ENCODE measurements at regions of chr12 and their contacts with region 1.

Region 1: DNA sequence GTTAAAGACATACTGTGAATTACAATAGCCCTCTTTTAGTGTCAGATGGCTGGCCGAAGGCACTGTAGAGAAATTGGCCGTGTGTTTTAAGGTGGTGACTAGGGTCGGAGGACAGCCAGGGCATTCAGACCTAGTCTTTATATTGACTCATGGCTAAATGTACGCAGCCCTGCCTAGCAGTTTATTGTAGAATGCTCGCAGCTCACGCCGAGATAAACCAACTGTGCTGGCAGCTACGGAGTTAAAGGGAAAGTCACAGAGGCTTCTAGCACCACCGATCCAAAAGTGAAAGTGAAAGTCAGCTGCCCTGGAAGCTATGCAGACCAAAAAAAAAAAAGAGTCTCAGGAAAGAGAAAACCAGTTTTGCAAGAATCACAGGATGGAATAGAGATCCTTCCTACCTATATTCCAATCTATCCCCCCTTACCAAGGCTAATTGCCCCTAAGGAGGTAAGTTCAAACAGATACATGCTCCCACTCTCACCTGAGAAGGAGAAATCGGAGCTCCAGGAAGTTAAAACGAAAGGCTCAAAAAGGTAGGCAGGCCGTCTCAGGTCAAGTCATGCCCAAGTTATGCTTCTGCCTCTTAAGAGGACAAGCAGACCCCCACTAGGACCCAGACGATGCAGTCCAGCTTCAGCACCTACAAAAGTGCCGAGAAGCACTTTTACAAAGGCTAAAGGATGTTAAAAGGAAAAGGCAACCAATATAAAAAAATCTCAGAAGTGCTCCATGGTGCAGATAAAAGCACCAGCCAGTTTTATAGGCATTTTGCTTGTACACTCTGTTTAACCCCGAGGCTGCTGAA is 24.8 kb downstream of the KLRK1 start:
- DNase-seq: peak; percentile 83

Region 2: DNA sequence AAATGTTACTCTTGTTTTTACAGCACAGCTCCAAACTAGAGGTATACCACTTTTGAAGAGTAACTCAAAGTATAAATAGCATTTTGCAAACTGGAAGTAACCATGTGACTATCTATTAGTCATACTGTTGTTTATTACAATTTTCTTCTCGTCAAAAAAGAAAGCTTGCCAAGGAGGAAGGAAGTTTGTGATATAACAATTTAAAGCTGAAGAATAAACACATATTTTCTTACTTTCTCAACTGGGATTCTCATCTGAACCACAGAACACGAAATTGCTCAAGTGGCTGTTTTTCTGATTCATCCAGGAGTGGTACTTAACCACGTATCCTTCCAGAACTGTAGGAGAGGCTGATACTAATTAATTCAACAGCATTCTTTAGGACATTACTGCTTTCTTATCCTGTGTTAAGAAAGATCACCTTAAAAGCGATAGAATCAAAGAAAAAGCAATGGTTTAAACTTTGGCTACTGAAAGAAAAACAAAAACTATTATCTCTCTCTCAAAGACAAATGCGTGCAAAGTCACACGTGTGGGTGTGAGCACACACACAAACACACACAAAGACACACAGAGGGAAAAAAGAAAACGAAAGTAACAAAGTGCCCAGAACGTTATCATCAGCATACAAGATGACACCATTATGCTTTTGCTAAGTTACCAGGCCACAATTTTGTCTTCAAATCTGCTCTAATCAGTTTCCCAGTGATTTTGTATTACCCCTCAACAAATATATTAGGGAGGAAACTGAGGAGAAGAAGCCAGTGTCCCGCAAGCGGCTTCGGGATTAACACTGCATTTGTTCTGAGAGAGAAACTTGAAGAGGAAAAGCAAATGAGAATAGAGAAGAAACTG is 495.5 kb before region 1 on chr12 and contains the start of gene CLEC2B:
- intact Hi-C with region 1: loop called (anchors 10 kb)
- DNase-seq: no peak
- total RNA-seq, gene CLEC2B: 6.7 TPM

Region 3: DNA sequence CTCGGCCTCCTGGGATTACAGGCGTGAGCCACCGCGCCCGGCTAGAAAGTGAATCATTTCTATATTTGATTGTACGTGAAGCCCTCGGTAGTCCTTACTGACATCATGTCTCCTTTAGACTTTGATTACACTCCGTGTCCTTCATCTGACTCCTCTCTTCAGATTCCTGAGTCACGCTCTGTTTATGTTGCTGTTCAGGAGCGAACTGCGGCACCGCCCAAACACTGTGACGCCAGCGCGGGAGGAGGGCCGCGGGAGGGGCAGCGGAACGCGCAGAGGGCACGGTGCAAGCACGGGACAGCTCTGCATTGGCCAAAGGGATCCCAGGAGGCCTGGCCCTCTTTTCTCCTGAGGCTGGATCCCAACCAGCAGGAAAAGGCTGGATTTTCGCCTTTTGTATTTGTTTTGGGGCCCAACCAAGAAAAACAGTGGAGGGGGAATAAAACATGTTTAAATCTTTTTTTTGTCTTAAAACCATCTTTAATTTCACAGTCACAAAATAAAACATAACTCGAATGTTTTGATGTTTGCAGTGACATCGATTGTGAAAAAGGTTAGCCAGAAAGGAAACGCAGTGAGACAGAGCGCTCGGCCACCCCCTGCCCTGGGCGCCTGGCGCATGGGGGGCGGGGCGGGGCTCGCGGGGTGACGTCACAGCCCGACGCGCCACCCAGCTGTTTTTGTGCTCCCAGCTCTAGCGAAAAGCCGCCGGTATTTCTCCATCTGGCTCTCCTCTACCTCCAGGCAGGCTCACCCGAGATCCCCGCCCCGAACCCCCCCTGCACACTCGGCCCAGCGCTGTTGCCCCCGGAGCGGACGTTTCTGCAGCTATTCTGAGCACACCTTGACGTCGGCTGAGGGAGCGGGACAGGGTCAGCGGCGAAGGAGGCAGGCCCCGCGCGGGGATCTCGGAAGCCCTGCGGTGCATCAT is 152.6 kb before region 1 on chr12 and contains the start of gene GABARAPL1:
- intact Hi-C with region 1: loop called (anchors 10 kb)
- DNase-seq: peak; percentile 99
- total RNA-seq, gene GABARAPL1: 280 TPM

Region 4: DNA sequence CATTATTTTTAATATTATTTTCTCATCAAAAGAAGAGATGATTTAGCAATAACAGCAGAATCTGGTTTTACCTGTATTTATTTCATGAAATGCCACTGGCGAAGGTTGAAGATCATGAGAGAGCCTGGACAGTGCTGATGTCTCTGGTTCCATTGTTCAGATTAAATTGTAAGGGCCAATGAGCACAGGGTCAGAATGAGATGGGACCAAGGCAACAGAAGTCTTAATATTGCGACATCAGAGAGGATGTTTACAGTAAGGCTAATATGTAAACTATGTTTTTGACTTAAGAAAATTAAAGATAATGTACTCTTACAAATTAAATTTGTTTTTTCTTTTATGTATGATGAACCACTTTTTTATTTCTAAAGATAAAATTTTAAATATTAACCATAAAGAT is 92.6 kb before region 1 on chr12:
- intact Hi-C with region 1: no loop called
- DNase-seq: no peak

Region 5: GRCh38 chr12:10285919-10286318 is 79.1 kb before region 1 on chr12:
- intact Hi-C with region 1: no loop called
- DNase-seq: no peak

Region 6: DNA sequence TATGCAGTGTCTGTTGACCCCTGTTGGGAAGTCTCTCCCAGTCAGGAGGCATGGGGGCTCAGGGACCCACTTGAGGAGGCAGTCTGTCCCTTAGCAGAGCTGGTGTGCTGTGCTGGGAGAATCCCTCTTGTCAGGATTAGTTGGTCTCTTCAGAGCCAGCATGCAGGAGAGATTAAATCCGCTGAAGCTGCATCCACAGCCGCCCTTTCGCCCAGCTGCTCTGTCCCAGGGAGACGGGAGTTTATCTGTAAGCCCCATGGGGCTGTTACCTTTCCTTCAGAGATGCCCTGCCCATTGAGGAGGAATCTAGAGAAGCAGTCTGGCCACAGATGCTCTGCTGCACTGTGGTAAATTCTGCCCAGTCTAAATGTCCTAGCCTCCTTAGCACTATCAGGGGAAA is 101.3 kb after region 1 on chr12:
- intact Hi-C with region 1: no loop called
- DNase-seq: no peak

Region 7: DNA sequence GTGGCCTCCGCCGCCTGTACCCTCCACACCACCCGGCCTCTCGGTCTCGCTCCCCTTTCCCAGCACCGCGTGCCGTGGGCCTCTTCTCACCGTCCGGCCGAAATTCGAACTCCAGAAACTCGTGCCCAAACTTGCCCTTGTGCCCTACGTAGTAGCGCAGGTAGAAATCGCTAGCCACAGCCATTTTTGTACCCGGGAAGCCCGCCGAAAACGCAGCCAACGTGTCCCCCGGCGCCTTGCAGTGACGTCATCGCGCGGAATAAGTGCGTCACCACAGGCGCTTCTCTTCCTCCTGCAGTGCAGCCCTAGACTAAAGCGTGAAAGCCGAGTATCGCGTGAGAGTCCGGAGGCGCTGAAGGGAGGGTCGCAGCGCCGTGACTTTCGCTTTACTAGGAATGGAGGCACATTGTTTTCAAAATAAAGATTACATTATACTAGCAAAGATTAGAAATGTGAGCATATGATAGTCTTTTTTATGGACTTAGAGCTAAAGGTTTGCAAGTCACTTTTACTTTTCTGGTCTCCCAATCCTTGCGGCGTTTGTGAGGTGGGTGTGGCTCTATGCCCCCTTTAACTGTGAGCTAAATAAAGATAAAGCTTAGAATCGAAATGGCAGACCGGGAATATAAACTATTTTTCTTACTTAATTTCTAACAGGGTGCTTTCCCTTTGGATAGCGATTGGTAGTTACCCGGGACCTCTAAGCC is 248.5 kb after region 1 on chr12 and contains the start of gene MAGOHB:
- intact Hi-C with region 1: loop called (anchors 5 kb)
- DNase-seq: peak; percentile 96
- total RNA-seq, gene MAGOHB: 11.7 TPM

Measured in cardiac septum (tissue), 1 donor.